Transverse colon (tissue), 4 donors: ENCODE measurements at regions of chr6 and their contacts with region 1.

Region 1: GRCh38 chr6:19804205-19805123 is 32.7 kb upstream of the ID4 start:
- DNase-seq: peak; percentile 94
- H3K4me3 ChIP-seq: peak overlapping the region; percentile 47 to 65 (median 56)
- H3K27ac ChIP-seq: peak overlapping the region; percentile 85 to 94 (median 88)
- H3K4me1 ChIP-seq: peaks cover 0 to 18% (median 13%) of the 10 kb centered on the region in 4 donors
- H3K27me3 ChIP-seq: no peaks in the 10 kb centered on the region
- CTCF ChIP-seq: no peak
- EP300 ChIP-seq: peak; percentile 88
- POLR2A ChIP-seq: peak; percentile 53

Region 2: GRCh38 chr6:19836799-19837510 is 32.5 kb after region 1 on chr6 and contains the start of gene ID4:
- in situ Hi-C with region 1: no loop called
- intact Hi-C with region 1: loop called (anchors 5 kb)
- DNase-seq: peak; percentile 90
- H3K4me3 ChIP-seq: peak within 1 kb of the TSS; percentile 48 to 69 (median 60)
- H3K27ac ChIP-seq: peak within 1 kb of the TSS; percentile 84 to 90 (median 87)
- H3K4me1 ChIP-seq: peaks cover 0 to 15% (median 3%) of the 10 kb centered on the region in 4 donors
- H3K27me3 ChIP-seq: peaks cover 51% of the 10 kb centered on the region
- CTCF ChIP-seq: no peak
- EP300 ChIP-seq: no peak
- POLR2A ChIP-seq: peak; percentile 90
- total RNA-seq, gene ID4: 5.7 to 54.7 (median 9.7) TPM